Heart right ventricle (tissue), 16 donors: ENCODE measurements at regions of chr11 and their contacts with region 1.

Region 1: GRCh38 chr11:12581923-12582322 is 92.3 kb upstream of the TEAD1 start:
- DNase-seq: no peak
- ATAC-seq: peak in 3 of 8 donors; percentile 53 to 59 (median 55)
- H3K4me3 ChIP-seq: no peak overlapping the region
- H3K27ac ChIP-seq: no peak overlapping the region
- H3K4me1 ChIP-seq: peaks cover 0 to 26% (median 15%) of the 10 kb centered on the region in 9 donors
- H3K27me3 ChIP-seq: no peaks in the 10 kb centered on the region
- CTCF ChIP-seq: no peak

Region 2: GRCh38 chr11:12526789-12527188 is 55.1 kb before region 1 on chr11:
- intact Hi-C with region 1: loop called in 1 of 10 experiments (anchors 10 kb)
- DNase-seq: no peak
- ATAC-seq: peak in 1 of 8 donors; percentile 53
- H3K4me3 ChIP-seq: no peak overlapping the region
- H3K27ac ChIP-seq: no peak overlapping the region
- H3K4me1 ChIP-seq: peaks cover 0 to 19% (median 12%) of the 10 kb centered on the region in 9 donors
- H3K27me3 ChIP-seq: no peaks in the 10 kb centered on the region
- CTCF ChIP-seq: no peak

Region 3: GRCh38 chr11:12537778-12538401 is 44.0 kb before region 1 on chr11:
- intact Hi-C with region 1: loop called in 1 of 10 experiments (anchors 2 kb)
- DNase-seq: no peak
- ATAC-seq: peak in 3 of 8 donors; percentile 25 to 48 (median 34)
- H3K4me3 ChIP-seq: no peak overlapping the region
- H3K27ac ChIP-seq: no peak overlapping the region
- H3K4me1 ChIP-seq: peaks cover 0 to 18% (median 11%) of the 10 kb centered on the region in 9 donors
- H3K27me3 ChIP-seq: no peaks in the 10 kb centered on the region
- CTCF ChIP-seq: no peak

Region 4: DNA sequence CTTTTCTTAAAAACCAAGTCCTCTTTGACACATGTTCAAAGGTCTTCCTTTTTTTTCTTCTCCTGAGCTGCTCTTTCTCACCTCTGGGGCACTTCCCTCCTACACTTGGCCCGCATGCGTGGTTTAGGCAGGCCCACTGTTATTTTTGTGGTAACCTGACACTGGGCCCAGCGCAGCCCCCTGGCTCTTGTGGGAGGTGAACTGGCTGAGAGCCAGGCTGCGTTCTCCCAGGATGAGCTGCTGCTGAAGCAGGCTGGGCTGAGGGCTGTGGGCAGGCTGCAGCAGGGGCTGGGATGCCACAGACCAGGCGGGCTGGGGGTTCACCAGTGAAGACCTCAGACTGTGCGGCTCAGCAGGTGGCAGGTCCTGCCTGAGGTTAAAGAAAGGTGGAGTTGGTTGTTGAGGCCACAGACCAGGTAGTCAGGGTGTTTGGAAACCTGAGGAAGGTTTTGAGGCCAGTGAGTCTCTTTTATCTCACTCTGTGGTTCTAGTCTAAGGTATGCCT is 164.7 kb after region 1 on chr11:
- intact Hi-C with region 1: no loop called
- DNase-seq: peak; percentile 70 to 77
- ATAC-seq: peak; percentile 54 to 81 (median 76)
- H3K4me3 ChIP-seq: no peak overlapping the region
- H3K27ac ChIP-seq: peak overlapping the region in 9 of 10 donors; percentile 18 to 79 (median 55)
- H3K4me1 ChIP-seq: peaks cover 7 to 63% (median 26%) of the 10 kb centered on the region in 9 donors
- H3K27me3 ChIP-seq: no peaks in the 10 kb centered on the region
- CTCF ChIP-seq: peak in 1 of 9 donors; percentile 8